Posterior vena cava (tissue), 2 donors: ENCODE measurements at regions of chr16 and their contacts with region 1.

Region 1: GRCh38 chr16:74793571-74793970 is 19.0 kb upstream of the FA2H start:
- DNase-seq: no peak

Region 2: DNA sequence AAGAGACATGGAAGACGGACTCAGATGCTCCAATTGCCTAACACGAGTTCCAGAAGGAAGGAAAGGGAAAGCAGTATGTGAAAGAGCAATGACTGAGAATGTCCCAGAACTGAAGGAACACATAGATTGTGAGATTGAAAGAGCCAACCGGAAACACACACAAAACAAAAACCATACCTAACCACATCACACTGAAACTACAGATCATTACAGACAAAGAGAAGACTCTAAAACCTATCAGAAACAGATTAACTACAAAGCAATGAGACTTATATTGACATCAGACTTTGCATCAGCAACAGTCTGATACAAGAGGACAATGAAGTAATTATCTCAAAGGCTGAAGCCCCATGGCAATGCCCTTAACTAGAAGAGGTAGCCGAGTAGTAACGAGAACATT is 326.7 kb before region 1 on chr16:
- intact Hi-C with region 1: no loop called
- DNase-seq: no peak

Region 3: DNA sequence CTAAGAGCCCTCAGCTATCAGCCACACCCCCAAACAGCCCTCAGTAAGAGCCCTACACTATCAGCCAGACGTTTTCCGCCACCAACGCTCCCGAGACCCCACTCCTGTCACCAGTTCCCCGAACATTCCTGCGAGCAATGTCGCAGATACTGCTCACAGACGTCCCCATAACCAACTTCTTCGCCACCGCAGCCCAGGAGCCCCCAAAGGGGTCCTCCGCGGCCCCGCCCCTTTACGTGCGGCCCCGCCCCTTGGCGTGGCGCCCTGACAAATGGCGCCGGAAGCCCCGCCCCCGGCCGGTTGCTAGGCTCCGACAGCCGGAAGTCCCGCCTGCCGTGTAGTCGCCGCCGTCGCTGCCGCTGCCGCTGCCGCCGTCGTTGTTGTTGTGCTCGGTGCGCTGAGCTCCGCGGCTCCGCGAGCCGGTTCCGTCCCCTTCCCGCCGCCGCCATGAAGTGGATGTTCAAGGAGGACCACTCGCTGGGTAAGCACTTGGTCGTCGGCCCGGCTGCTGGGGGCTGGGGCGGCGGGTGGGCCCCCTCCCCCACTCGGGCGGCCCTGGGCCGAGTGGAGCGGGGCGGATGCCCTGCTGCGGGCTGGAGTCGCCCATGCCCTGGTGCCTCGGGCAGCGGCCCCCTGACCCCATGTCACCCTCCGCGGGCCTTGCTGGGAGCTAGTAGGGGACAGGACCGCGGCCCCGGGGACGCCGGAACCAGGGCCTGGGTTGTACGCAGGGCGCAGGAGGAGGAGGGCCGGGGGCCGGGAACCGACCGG is 772.7 kb after region 1 on chr16 and contains the start of gene GABARAPL2:
- intact Hi-C with region 1: no loop called
- DNase-seq: peak; percentile 96
- total RNA-seq, gene GABARAPL2: 94.3 to 96.0 TPM

Region 4: DNA sequence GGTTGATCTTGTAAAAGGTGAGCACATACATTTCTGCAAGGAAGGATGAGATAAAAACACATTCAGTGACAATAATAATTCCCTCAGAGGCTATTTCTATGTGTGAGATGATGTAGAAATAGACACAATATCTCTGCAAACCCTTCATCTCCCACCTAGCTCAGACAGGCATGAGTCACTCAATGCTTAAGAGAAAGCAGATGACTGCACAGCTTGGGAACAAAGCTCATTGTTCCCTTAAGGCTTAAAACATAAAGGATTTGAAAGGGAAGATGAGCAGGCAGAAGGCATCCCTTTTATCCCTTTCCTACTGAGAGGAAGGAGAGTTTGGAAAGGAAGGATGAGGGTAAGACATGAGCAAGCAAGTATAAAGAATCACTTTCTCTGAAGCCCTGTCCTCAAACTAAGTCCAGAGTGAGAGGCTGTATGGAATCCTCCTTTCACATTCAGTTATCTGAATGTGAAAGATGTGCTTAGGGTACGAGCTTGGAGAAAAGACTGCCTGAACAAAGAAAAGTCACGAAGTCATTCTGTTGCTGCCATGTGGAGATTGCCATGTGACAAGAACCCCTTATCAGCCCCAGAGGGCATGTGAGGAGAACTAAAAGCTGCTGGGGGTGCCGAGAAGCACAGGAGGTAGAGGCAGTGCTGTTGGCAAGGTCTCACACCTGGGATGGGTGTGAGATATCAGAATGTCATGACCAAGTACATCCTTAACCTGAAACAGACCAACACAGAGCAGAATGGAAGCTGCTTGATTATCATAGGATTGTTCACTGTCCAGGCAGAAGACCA is 1541.8 kb after region 1 on chr16:
- intact Hi-C with region 1: loop called in 1 of 2 experiments (anchors 10 kb)
- DNase-seq: no peak